Left colon (tissue), 2 donors: ENCODE measurements at regions of chr1 and their contacts with region 1.

Region 1: GRCh38 chr1:91511386-91511785 is 10.7 kb downstream of the CDC7 start:
- DNase-seq: no peak
- ATAC-seq: no peak

Region 2: GRCh38 chr1:91021686-91022517 is 489.5 kb before region 1 on chr1 and contains the start of gene ZNF644:
- intact Hi-C with region 1: no loop called
- DNase-seq: peak; percentile 89 to 93
- ATAC-seq: peak; percentile 89
- total RNA-seq, gene ZNF644: 46.1 to 56.0 TPM

Region 3: DNA sequence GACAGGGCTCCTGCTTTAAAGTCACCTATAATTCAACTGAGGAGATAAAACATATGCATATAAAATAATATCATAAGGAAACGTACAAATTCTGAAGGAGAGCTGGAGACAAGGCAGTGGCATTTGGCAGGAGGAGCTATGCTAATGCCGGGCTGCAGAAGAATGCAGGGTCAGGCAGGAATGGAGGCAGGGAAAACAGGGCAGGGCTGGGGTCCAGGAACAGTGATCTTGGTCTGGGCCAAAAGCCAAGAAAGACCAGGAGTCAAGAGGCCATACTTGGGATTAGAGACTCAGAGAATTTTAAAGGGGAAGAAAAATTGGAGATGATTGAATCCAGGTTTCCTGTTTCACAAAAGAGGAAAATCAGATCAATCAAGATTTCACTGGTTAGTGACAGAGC is 417.9 kb after region 1 on chr1:
- intact Hi-C with region 1: loop called in 1 of 2 experiments (anchors 5 kb)
- DNase-seq: no peak
- ATAC-seq: no peak

Region 4: GRCh38 chr1:92298573-92299476 is 787.4 kb after region 1 on chr1 and contains the starts of genes GLMN and RPAP2:
- intact Hi-C with region 1: loop called in 1 of 2 experiments (anchors 10 kb)
- DNase-seq: peak; percentile 73 to 86
- ATAC-seq: peak; percentile 98
- total RNA-seq, gene GLMN: 5.4 TPM
- total RNA-seq, gene RPAP2: 19.7 to 24.2 TPM